ENCODE measurements at regions of chr12 and their contacts with region 1.

Region 1: GRCh38 chr12:103930034-103930786 is at the start of gene HSP90B1:
- DNase-seq: peak; percentile 96 to 100 (median 100)
- ATAC-seq: peak; percentile 76 to 77
- H3K4me3 Mint-ChIP-seq: peak within 1 kb of the TSS; percentile 83 to 98 (median 94)
- H3K27ac Mint-ChIP-seq: peak within 1 kb of the TSS; percentile 97 to 100 (median 100)
- H3K4me1 Mint-ChIP-seq: peaks cover 31 to 73% (median 64%) of the 10 kb centered on the region in 4 donors
- H3K27me3 Mint-ChIP-seq: peaks cover 0 to 4% (median 0%) of the 10 kb centered on the region in 5 donors
- polyA plus RNA-seq, gene HSP90B1: 174 to 223 (median 206) TPM

Region 2: DNA sequence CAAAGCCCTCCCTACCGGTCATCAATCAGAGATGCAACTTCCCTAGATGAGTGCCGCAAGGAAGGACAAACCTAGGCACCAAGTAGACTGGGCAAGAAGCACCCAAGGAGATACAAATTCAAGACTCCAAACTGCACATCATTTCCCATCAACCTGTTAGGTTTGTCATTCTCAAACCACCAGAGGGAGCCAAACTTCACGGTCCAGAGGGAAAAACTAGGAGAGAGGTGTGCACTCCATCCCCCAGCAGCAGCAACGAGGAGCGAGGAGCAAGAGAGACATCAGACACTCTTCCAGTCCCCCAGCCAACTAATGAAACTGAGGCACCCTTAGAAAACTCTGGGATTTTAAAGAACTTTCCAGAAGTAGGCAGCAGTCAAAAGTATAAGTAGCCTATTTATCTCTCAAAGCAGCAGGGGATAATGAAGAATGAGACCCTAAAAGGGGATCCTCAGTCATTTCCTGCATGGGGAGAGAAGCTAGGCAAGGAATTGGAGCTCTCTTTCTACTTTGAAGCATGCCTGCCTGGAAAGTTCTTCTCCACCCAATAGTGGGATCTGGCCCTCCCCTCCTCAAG is 52.2 kb before region 1 on chr12:
- POLR2A ChIA-PET with region 1: interaction called, 38 read pairs
- DNase-seq: peak in 9 of 10 donors; percentile 17 to 71 (median 50)
- ATAC-seq: peak; percentile 70 to 84
- H3K4me3 Mint-ChIP-seq: peak overlapping the region in 3 of 10 donors; percentile 8 to 62 (median 42)
- H3K27ac Mint-ChIP-seq: peak overlapping the region in 2 of 10 donors; percentile 18 to 78
- H3K4me1 Mint-ChIP-seq: peaks cover 6 to 32% (median 21%) of the 10 kb centered on the region in 4 donors
- H3K27me3 Mint-ChIP-seq: no peaks in the 10 kb centered on the region

Region 3: GRCh38 chr12:103901518-103902173 is 28.6 kb before region 1 on chr12:
- POLR2A ChIA-PET with region 1: interaction called, 180 read pairs
- DNase-seq: peak; percentile 25 to 86 (median 70)
- ATAC-seq: peak; percentile 97 to 98
- H3K4me3 Mint-ChIP-seq: peak overlapping the region; percentile 67 to 90 (median 79)
- H3K27ac Mint-ChIP-seq: peak overlapping the region; percentile 90 to 98 (median 94)
- H3K4me1 Mint-ChIP-seq: peaks cover 36 to 72% (median 62%) of the 10 kb centered on the region in 4 donors
- H3K27me3 Mint-ChIP-seq: no peaks in the 10 kb centered on the region

Region 4: DNA sequence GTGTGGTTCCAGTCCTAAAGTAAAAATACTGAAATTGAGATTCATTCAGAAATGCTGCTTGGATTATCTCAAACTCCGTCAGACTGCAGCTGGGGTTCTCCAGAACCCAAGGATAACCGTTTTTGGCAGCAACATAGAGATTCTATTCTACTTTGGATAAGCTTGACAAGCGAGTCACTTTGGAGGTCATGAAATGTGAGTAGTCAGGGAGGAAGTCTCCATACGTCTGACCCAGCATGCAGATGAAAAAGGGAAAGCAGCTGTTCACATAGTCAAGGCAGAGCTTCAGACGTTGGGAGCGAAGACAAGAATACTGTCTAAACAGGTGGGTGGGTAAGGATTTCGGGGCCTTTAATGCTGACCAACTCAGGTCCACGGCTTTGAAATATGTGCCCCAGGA is 14.9 kb before region 1 on chr12:
- POLR2A ChIA-PET with region 1: interaction called, 23 read pairs
- DNase-seq: no peak
- ATAC-seq: no peak
- H3K4me3 Mint-ChIP-seq: no peak overlapping the region
- H3K27ac Mint-ChIP-seq: no peak overlapping the region
- H3K4me1 Mint-ChIP-seq: peaks cover 0 to 5% (median 0%) of the 10 kb centered on the region in 4 donors
- H3K27me3 Mint-ChIP-seq: peaks cover 0 to 1% (median 0%) of the 10 kb centered on the region in 5 donors

Region 5: DNA sequence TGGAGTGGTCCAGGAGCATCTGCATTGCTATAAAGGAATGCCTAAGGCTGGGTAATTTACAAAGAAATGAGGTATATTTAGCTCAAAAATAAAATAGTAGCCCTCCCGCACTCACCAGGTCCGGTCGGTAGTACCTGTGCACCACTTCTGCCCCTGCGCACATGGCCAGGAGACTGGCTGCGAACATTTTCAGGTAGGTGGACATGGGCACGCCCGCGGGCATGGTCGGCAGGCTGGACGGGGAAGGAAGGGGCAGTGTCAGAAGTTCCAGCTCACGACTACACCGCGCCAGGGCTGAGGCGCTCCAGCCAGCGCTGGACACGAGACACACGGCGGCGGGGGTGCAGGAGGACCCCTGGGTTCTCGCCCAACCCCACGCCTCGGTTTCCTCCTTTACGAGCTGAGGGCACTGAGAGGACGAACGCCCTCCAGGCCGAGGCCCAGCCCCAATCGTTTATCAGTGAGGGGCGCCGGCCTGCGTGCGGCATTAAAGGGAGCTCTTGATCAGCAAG is 26.4 kb after region 1 on chr12:
- POLR2A ChIA-PET with region 1: interaction called, 72 read pairs
- DNase-seq: no peak
- ATAC-seq: peak; percentile 6 to 10
- H3K4me3 Mint-ChIP-seq: peak overlapping the region; percentile 98 to 100 (median 99)
- H3K27ac Mint-ChIP-seq: peak overlapping the region; percentile 95 to 100 (median 98)
- H3K4me1 Mint-ChIP-seq: peaks cover 17 to 46% (median 43%) of the 10 kb centered on the region in 4 donors
- H3K27me3 Mint-ChIP-seq: no peaks in the 10 kb centered on the region

Region 6: DNA sequence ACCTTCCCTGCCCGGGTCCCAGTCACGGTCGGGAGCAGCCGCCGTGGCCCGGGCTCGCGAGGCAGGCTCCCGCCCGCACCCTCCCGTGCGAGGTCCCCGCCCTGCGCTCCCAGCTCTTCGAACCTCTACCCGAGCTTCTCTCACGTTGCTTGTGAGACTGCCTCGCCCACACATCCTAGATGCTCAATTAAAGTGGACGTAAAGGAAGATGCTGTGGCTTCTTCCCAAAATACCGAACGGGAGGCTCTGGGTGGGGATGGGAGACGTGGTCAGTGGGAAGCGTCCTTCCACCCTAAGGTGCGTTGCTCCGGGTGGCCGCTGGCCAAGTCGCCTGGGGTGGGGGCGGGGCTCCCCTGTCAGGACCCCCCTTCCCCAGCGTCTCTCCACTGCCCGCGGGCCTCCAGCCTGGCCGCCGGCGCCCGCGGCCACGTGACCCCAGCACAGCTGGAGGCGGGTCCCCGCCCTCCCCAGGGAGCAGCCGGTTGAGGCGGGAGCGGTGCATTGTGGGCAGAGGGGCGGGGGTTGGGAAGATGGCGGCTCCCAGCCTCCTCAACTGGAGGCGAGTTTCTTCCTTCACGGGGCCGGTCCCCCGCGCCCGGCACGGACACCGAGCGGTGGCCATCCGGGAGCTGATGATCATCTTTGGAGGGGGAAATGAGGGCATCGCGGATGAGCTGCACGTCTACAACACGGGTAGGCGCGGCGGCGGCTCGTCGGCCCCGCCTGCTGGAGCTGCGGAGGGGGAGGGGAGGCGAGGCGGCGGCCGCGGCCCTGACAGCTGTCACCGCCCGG is 134.0 kb after region 1 on chr12 and contains the start of gene HCFC2:
- POLR2A ChIA-PET with region 1: interaction called, 22 read pairs
- DNase-seq: peak; percentile 76 to 91 (median 82)
- ATAC-seq: peak; percentile 93
- H3K4me3 Mint-ChIP-seq: peak within 1 kb of the TSS; percentile 90 to 97 (median 94)
- H3K27ac Mint-ChIP-seq: peak within 1 kb of the TSS; percentile 74 to 97 (median 93)
- H3K4me1 Mint-ChIP-seq: peaks cover 10 to 24% (median 18%) of the 10 kb centered on the region in 4 donors
- H3K27me3 Mint-ChIP-seq: peaks cover 0 to 12% (median 8%) of the 10 kb centered on the region in 5 donors
- polyA plus RNA-seq, gene HCFC2: 4.1 to 6.9 (median 6.3) TPM

Region 7: DNA sequence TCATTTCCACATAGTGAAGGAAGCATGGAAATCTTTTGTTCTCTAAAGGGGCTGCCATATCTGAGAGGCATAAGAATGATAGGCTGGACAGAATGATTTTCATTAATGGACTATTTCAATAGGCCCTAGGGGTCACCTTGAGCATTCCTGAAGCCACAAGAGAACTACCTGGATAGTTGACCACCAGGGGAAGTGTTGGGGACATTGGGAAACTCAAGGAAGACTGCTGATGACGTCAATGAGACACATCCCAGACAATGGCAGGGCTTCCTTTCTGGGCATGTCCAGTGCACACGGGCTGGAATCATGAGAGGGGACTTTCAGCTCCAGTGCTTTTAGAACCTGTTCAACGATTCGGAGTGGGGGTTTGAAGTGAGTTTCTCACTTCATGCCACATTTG is 477.7 kb after region 1 on chr12:
- POLR2A ChIA-PET with region 1: no interaction called
- DNase-seq: no peak
- ATAC-seq: no peak
- H3K4me3 Mint-ChIP-seq: no peak overlapping the region
- H3K27ac Mint-ChIP-seq: no peak overlapping the region
- H3K4me1 Mint-ChIP-seq: no peaks in the 10 kb centered on the region
- H3K27me3 Mint-ChIP-seq: no peaks in the 10 kb centered on the region